Activated B cell treated with CpG ODN at 0.5 μM for 24 hours (primary cell): ENCODE measurements at regions of chr19 and their contacts with region 1.

Region 1: DNA sequence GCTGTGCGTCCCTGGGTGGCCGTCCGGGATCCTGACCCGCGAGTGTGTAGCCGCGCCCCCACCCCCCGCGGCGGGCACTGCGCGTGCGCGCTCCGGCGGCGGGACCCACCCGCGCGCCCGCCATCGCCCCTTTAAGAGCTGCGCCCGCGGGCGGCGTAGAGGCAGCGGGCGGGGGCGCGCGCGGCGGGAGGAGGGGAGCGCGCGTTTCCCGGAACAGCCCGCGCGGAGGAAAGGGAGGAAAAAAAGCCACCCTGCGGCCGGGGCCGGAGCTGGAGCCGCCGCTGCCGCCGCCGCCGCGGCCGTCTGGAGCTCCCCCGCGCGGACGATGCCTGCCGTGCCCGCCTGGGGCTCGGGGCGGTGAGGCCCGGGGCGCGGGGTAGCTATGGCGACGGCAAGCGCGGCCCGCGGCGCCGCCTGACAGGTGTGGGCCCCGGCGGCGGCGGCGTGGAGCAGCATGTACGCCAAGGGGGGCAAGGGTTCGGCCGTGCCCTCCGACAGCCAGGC is at the start of gene SSBP4:
- DNase-seq: peak; percentile 72
- ATAC-seq: peak; percentile 67
- H3K4me3 Mint-ChIP-seq: peak within 1 kb of the TSS; percentile 77
- H3K27ac Mint-ChIP-seq: peak within 1 kb of the TSS; percentile 12
- H3K4me1 Mint-ChIP-seq: peaks cover 73% of the 10 kb centered on the region
- H3K27me3 Mint-ChIP-seq: peaks cover 33% of the 10 kb centered on the region
- CTCF ChIP-seq: no peak
- total RNA-seq, gene SSBP4: 28.5 and 36.6 TPM in 2 replicates

Region 2: GRCh38 chr19:17947815-17948513 is 471.3 kb before region 1 on chr19:
- CTCF ChIA-PET with region 1: no interaction called
- POLR2A ChIA-PET with region 1: no interaction called
- intact Hi-C with region 1: loop called (anchors 10 kb)
- DNase-seq: peak; percentile 98
- ATAC-seq: peak; percentile 63
- H3K4me3 Mint-ChIP-seq: peak overlapping the region; percentile 74
- H3K27ac Mint-ChIP-seq: no peak overlapping the region
- H3K4me1 Mint-ChIP-seq: peaks cover 59% of the 10 kb centered on the region
- H3K27me3 Mint-ChIP-seq: peaks cover 12% of the 10 kb centered on the region
- CTCF ChIP-seq: no peak

Region 3: DNA sequence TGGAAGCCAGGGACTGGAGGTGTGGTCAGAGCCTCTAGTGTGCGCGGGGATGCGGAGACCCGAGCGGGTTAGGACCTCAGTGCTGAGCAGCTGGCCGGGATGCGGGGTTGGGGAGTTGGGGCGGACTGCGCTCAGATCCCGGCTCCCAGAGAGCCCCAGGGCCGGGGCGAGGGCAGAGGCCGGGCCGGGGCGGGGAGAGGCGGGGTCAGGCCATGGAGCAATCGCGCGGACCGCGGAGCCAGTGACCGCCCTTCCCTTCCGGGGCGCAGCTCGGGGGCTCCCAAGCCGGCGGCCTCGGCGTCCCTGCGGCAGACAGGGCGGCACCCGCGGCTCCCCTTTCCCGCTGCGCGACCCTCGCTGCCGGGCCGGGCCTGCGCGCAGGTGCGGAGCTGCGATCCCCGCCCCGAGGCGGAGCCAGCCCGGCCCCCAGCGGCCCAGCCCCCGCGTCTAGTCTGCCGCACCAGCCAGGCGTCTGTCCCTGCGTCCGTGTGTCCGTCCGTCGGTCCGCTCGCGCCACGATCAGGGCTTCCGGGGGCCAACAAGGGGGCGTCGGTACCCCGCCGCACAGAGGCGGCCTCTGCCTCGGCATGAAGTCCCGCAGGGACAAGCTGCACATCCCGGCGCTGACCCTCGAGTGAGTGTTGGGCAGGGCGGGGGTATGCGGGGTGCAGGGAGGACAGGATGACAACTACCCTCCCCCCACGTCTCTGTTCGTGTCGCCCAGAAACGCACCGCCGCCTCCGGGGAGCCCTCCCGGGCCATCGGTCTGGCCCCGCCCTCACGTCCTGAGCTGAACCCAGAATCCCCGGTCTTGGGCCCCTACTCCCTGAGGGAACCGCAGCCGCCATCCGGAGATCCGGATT is 309.3 kb before region 1 on chr19:
- CTCF ChIA-PET with region 1: no interaction called
- POLR2A ChIA-PET with region 1: no interaction called
- intact Hi-C with region 1: loop called (anchors 10 kb)
- DNase-seq: peak; percentile 62
- ATAC-seq: peak; percentile 57
- H3K4me3 Mint-ChIP-seq: peak overlapping the region; percentile 80
- H3K27ac Mint-ChIP-seq: peak overlapping the region; percentile 83
- H3K4me1 Mint-ChIP-seq: peaks cover 54% of the 10 kb centered on the region
- H3K27me3 Mint-ChIP-seq: no peaks in the 10 kb centered on the region
- CTCF ChIP-seq: no peak

Region 4: GRCh38 chr19:18167975-18168645 is 251.1 kb before region 1 on chr19:
- CTCF ChIA-PET with region 1: no interaction called
- POLR2A ChIA-PET with region 1: no interaction called
- intact Hi-C with region 1: no loop called
- DNase-seq: peak; percentile 52
- ATAC-seq: peak; percentile 34
- H3K4me3 Mint-ChIP-seq: peak overlapping the region; percentile 66
- H3K27ac Mint-ChIP-seq: peak overlapping the region; percentile 82
- H3K4me1 Mint-ChIP-seq: peaks cover 53% of the 10 kb centered on the region
- H3K27me3 Mint-ChIP-seq: no peaks in the 10 kb centered on the region
- CTCF ChIP-seq: peak; percentile 44

Region 5: GRCh38 chr19:18340190-18340989 is 78.9 kb before region 1 on chr19 and contains the start of gene PGPEP1:
- CTCF ChIA-PET with region 1: no interaction called
- POLR2A ChIA-PET with region 1: no interaction called
- intact Hi-C with region 1: loop called (anchors 2 kb)
- DNase-seq: peak; percentile 70
- ATAC-seq: peak; percentile 72
- H3K4me3 Mint-ChIP-seq: peak within 1 kb of the TSS; percentile 80
- H3K27ac Mint-ChIP-seq: peak within 1 kb of the TSS; percentile 3
- H3K4me1 Mint-ChIP-seq: peaks cover 13% of the 10 kb centered on the region
- H3K27me3 Mint-ChIP-seq: peaks cover 6% of the 10 kb centered on the region
- CTCF ChIP-seq: no peak
- total RNA-seq, gene PGPEP1: 5.6 and 6.9 TPM in 2 replicates

Region 6: GRCh38 chr19:18388100-18388959 is 30.9 kb before region 1 on chr19:
- CTCF ChIA-PET with region 1: interaction called, 59 read pairs
- POLR2A ChIA-PET with region 1: interaction called, 10 read pairs
- intact Hi-C with region 1: no loop called
- DNase-seq: peak; percentile 87
- ATAC-seq: peak; percentile 82
- H3K4me3 Mint-ChIP-seq: peak overlapping the region; percentile 76
- H3K27ac Mint-ChIP-seq: no peak overlapping the region
- H3K4me1 Mint-ChIP-seq: peaks cover 45% of the 10 kb centered on the region
- H3K27me3 Mint-ChIP-seq: peaks cover 6% of the 10 kb centered on the region
- CTCF ChIP-seq: peak; percentile 92

Region 7: DNA sequence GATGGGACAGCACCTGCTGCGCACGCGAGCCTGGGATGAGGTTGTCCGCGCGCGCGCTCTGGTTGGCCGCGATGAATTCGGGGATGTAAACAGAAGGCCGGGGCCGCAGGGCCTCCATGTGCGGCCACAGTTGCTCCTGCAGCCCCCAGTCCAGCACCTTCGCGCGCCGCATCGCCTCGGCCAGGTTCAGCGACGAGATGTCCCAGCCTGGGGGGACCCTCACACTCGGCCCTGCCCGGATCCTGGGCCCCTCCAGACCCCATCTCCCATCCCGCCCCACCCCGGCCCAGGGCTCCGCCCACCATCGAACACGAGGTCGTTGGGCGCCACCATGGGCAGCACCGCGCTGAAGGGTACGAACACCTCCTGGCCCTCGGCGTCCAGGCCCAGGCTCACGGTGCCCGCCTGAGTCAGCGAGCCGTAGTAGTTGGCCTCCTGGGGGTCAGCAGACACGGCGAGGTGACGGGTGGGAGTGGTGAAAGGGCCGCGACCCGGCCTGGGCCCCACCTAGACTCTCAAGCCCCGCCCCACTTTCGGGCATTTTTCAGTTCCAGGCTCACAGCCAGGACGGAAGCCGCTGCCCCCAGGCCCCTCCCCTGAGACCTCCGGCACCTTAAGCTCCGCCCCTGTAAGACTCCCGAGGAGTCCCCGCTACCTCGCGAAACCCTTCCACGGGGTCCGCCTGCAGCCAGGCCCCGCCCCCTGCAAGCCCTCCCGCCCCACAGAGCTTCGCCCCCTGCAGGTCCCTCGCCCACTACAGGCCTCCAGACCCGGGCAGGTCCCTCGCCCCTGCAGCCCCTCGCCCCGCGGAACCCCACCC is 17.6 kb after region 1 on chr19:
- CTCF ChIA-PET with region 1: interaction called, 3 read pairs
- POLR2A ChIA-PET with region 1: interaction called, 11 read pairs
- intact Hi-C with region 1: no loop called
- DNase-seq: peak; percentile 71
- ATAC-seq: peak; percentile 72
- H3K4me3 Mint-ChIP-seq: peak overlapping the region; percentile 78
- H3K27ac Mint-ChIP-seq: no peak overlapping the region
- H3K4me1 Mint-ChIP-seq: peaks cover 38% of the 10 kb centered on the region
- H3K27me3 Mint-ChIP-seq: no peaks in the 10 kb centered on the region
- CTCF ChIP-seq: no peak

Region 8: GRCh38 chr19:18733196-18733647 is 314.0 kb after region 1 on chr19:
- CTCF ChIA-PET with region 1: no interaction called
- POLR2A ChIA-PET with region 1: no interaction called
- intact Hi-C with region 1: no loop called
- DNase-seq: no peak
- ATAC-seq: no peak
- H3K4me3 Mint-ChIP-seq: no peak overlapping the region
- H3K27ac Mint-ChIP-seq: no peak overlapping the region
- H3K4me1 Mint-ChIP-seq: peaks cover 5% of the 10 kb centered on the region
- H3K27me3 Mint-ChIP-seq: no peaks in the 10 kb centered on the region
- CTCF ChIP-seq: no peak